ENCODE measurements at regions of chr13 and their contacts with region 1.

Region 1: GRCh38 chr13:25574437-25575411 is 202.9 kb downstream of the ATP8A2 start:
- DNase-seq: peak in 4 of 5 donors; percentile 31 to 53 (median 44)
- H3K4me3 ChIP-seq: no peak overlapping the region
- H3K27ac ChIP-seq: no peak overlapping the region
- H3K4me1 ChIP-seq: no peaks in the 10 kb centered on the region
- H3K27me3 ChIP-seq: no peaks in the 10 kb centered on the region
- CTCF ChIP-seq: peak in 1 of 3 donors; percentile 34
- EP300 ChIP-seq: no peak
- POLR2A ChIP-seq: no peak

Region 2: GRCh38 chr13:25630329-25630900 is 55.7 kb after region 1 on chr13:
- intact Hi-C with region 1: no loop called
- DNase-seq: no peak
- H3K4me3 ChIP-seq: no peak overlapping the region
- H3K27ac ChIP-seq: no peak overlapping the region
- H3K4me1 ChIP-seq: no peaks in the 10 kb centered on the region
- H3K27me3 ChIP-seq: no peaks in the 10 kb centered on the region
- CTCF ChIP-seq: no peak
- EP300 ChIP-seq: no peak
- POLR2A ChIP-seq: no peak

Region 3: DNA sequence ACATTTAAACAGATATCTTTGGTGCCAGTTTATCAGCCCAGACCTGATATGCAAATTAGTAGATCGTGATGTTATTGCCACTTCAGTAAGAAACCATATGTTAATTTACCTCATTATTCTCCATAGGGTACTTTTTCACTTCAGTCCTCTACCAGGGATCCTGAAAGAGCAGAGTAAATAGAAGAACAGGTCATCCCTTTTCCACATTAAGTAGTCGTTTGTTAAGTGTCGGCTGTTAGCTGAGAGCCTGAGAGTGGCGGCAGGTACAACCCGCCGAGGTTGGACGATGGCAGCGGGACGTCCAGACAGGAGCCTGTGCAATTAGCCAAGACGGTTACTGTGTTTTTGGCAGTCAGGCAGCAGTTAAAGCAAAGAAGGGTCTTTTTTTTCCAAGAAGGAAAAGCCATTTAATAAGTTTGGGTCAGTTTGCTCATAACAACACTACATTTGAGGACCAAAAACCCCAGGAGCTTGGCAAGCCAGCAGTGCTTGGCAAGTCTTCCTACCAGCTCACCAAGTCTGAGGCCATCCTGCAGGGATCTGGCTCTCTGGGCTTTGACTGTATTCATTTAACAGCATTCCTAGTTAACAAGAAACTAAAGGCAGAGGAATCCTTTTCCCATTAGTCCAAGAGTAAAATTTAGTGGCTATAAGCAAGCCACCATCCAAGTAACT is 245.3 kb after region 1 on chr13:
- intact Hi-C with region 1: no loop called
- DNase-seq: no peak
- H3K4me3 ChIP-seq: no peak overlapping the region
- H3K27ac ChIP-seq: no peak overlapping the region
- H3K4me1 ChIP-seq: no peaks in the 10 kb centered on the region
- H3K27me3 ChIP-seq: no peaks in the 10 kb centered on the region
- CTCF ChIP-seq: no peak
- EP300 ChIP-seq: no peak
- POLR2A ChIP-seq: no peak

Region 4: GRCh38 chr13:26062844-26063444 is 488.2 kb after region 1 on chr13:
- intact Hi-C with region 1: loop called in 1 of 4 experiments (anchors 10 kb)
- DNase-seq: no peak
- H3K4me3 ChIP-seq: no peak overlapping the region
- H3K27ac ChIP-seq: no peak overlapping the region
- H3K4me1 ChIP-seq: no peaks in the 10 kb centered on the region
- H3K27me3 ChIP-seq: no peaks in the 10 kb centered on the region
- CTCF ChIP-seq: peak in 1 of 3 donors; percentile 10
- EP300 ChIP-seq: no peak
- POLR2A ChIP-seq: no peak

Region 5: GRCh38 chr13:26074706-26075105 is 500.0 kb after region 1 on chr13:
- intact Hi-C with region 1: loop called in 2 of 4 experiments (anchors 10 kb)
- DNase-seq: no peak
- H3K4me3 ChIP-seq: no peak overlapping the region
- H3K27ac ChIP-seq: no peak overlapping the region
- H3K4me1 ChIP-seq: no peaks in the 10 kb centered on the region
- H3K27me3 ChIP-seq: no peaks in the 10 kb centered on the region
- CTCF ChIP-seq: no peak
- EP300 ChIP-seq: no peak
- POLR2A ChIP-seq: no peak

Measured in ovary (tissue), 10 donors.